Activated naive CD4-positive, alpha-beta T cell treated with anti-CD3 and anti-CD28 coated beads for 36 hours (primary cell): ENCODE measurements at regions of chr1 and their contacts with region 1.

Region 1: GRCh38 chr1:66350001-66350547 is 183.9 kb upstream of the SGIP1 start:
- DNase-seq: peak; percentile 80
- H3K4me3 Mint-ChIP-seq: peak overlapping the region; percentile 33
- H3K27ac Mint-ChIP-seq: peak overlapping the region; percentile 90
- H3K4me1 Mint-ChIP-seq: peaks cover 92% of the 10 kb centered on the region
- H3K27me3 Mint-ChIP-seq: no peaks in the 10 kb centered on the region

Region 2: GRCh38 chr1:66253330-66253921 is 96.6 kb before region 1 on chr1:
- CTCF ChIA-PET with region 1: interaction called, 13 read pairs
- intact Hi-C with region 1: loop called (anchors 1 kb)
- DNase-seq: peak; percentile 39
- H3K4me3 Mint-ChIP-seq: no peak overlapping the region
- H3K27ac Mint-ChIP-seq: no peak overlapping the region
- H3K4me1 Mint-ChIP-seq: peaks cover 48% of the 10 kb centered on the region
- H3K27me3 Mint-ChIP-seq: no peaks in the 10 kb centered on the region

Region 3: DNA sequence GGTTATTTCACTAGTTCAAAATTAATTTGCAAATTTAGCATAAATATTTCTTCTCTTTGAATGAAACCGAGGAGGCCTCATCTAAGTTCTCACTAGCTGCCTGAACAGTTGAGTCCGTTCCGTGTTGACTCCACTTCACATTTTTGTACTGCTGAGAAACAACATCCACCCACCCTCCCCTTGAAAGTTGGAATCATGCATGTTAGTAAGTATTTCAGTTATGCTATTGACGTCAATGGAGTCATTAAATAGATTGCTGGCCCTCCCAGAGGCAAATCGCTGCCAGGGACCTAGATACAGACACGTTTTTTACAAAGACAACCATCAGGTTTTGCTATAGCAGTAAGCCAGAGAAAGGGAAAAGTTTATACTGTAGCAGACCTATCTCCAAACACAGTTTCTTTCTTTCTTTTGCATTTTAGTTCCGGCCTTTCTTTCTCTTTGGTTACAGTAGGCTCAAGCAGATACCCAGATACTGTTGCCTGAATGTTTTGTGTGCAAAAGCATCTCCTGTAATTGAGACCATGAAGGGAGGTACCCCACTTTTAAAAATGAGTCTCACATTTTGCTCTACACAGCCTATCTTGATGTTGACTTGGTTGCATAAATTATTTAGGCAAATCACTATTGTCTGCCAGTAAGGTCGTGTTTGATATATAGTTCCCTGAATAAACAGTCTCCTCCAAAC is 78.7 kb before region 1 on chr1:
- CTCF ChIA-PET with region 1: interaction called, 15 read pairs
- intact Hi-C with region 1: loop called (anchors 1 kb)
- DNase-seq: peak; percentile 84
- H3K4me3 Mint-ChIP-seq: peak overlapping the region; percentile 54
- H3K27ac Mint-ChIP-seq: peak overlapping the region; percentile 90
- H3K4me1 Mint-ChIP-seq: peaks cover 74% of the 10 kb centered on the region
- H3K27me3 Mint-ChIP-seq: no peaks in the 10 kb centered on the region

Region 4: DNA sequence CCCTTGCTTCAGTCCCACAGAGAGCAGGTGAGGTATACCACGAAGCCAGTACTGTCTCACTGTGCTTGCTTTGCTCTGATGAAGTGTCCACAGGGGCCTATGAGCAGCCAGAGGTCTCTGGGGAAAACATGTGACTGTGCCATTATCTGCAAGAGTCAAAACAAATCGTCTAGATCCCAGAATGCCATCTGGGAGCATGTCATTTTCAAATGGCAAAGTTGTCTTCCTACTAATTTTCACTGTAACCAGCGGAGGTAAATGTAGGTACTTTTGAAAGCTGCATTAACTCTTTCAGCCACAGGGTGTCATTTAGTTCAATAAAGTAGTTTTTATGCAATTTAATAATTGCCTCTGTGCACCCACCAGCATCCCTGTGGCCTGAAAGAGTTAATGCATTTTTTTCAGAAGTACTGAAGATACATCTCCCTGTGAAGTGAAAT is 10.2 kb after region 1 on chr1:
- CTCF ChIA-PET with region 1: interaction called, 11 read pairs
- intact Hi-C with region 1: no loop called
- DNase-seq: no peak
- H3K4me3 Mint-ChIP-seq: no peak overlapping the region
- H3K27ac Mint-ChIP-seq: no peak overlapping the region
- H3K4me1 Mint-ChIP-seq: peaks cover 73% of the 10 kb centered on the region
- H3K27me3 Mint-ChIP-seq: no peaks in the 10 kb centered on the region

Region 5: GRCh38 chr1:66436378-66437145 is 86.5 kb after region 1 on chr1:
- CTCF ChIA-PET with region 1: interaction called, 26 read pairs
- intact Hi-C with region 1: loop called (anchors 1 kb)
- DNase-seq: peak; percentile 81
- H3K4me3 Mint-ChIP-seq: no peak overlapping the region
- H3K27ac Mint-ChIP-seq: no peak overlapping the region
- H3K4me1 Mint-ChIP-seq: peaks cover 40% of the 10 kb centered on the region
- H3K27me3 Mint-ChIP-seq: peaks cover 2% of the 10 kb centered on the region

Region 6: DNA sequence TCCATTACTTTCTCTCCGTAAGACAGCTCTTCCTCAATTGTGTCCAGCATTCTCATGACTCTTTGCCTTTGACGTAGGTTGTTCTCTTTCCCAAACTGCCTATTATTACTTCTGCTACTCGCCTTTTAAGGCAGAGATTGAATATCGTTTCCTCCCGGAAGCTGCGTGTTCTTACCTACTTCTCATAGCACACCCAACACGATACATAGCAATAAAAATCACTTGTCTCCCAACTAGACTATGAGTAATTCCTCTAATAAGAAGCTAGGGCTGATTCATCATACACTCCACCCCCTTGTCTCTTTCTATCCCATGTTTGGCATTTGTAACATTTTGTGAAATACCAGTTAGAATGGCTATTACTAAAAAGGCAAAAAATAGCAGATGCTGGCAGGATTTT is 128.0 kb after region 1 on chr1:
- CTCF ChIA-PET with region 1: no interaction called
- intact Hi-C with region 1: no loop called
- DNase-seq: no peak
- H3K4me3 Mint-ChIP-seq: no peak overlapping the region
- H3K27ac Mint-ChIP-seq: no peak overlapping the region
- H3K4me1 Mint-ChIP-seq: no peaks in the 10 kb centered on the region
- H3K27me3 Mint-ChIP-seq: peaks cover 20% of the 10 kb centered on the region

Region 7: DNA sequence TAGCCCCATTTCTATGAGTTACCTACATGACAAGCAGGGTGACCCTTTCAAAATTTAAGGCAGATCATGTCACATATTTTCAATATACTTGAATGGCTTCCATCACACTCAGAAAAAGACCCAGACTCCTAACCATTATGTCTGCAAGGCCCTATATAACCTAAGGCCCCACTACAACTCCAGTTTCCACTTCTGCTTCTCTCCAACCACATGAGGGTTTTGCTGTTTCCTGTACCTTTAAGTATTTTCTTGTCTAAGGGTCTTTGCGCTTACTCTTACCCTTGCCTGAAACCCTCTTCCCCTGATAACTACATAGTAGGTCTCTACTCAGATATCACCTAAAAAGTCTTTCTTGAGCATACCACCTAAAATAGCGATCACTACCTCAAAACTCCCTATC is 230.0 kb after region 1 on chr1:
- CTCF ChIA-PET with region 1: no interaction called
- intact Hi-C with region 1: no loop called
- DNase-seq: no peak
- H3K4me3 Mint-ChIP-seq: no peak overlapping the region
- H3K27ac Mint-ChIP-seq: no peak overlapping the region
- H3K4me1 Mint-ChIP-seq: no peaks in the 10 kb centered on the region
- H3K27me3 Mint-ChIP-seq: no peaks in the 10 kb centered on the region

Region 8: GRCh38 chr1:66890621-66891020 is 540.5 kb after region 1 on chr1:
- CTCF ChIA-PET with region 1: no interaction called
- intact Hi-C with region 1: no loop called
- DNase-seq: no peak
- H3K4me3 Mint-ChIP-seq: no peak overlapping the region
- H3K27ac Mint-ChIP-seq: no peak overlapping the region
- H3K4me1 Mint-ChIP-seq: no peaks in the 10 kb centered on the region
- H3K27me3 Mint-ChIP-seq: no peaks in the 10 kb centered on the region

Region 9: GRCh38 chr1:67174716-67175284 is 824.7 kb after region 1 on chr1:
- CTCF ChIA-PET with region 1: no interaction called
- intact Hi-C with region 1: loop called (anchors 5 kb)
- DNase-seq: peak; percentile 63
- H3K4me3 Mint-ChIP-seq: peak overlapping the region; percentile 7
- H3K27ac Mint-ChIP-seq: peak overlapping the region; percentile 99
- H3K4me1 Mint-ChIP-seq: peaks cover 81% of the 10 kb centered on the region
- H3K27me3 Mint-ChIP-seq: no peaks in the 10 kb centered on the region